ENCODE measurements at regions of chr14 and their contacts with region 1.

Region 1: DNA sequence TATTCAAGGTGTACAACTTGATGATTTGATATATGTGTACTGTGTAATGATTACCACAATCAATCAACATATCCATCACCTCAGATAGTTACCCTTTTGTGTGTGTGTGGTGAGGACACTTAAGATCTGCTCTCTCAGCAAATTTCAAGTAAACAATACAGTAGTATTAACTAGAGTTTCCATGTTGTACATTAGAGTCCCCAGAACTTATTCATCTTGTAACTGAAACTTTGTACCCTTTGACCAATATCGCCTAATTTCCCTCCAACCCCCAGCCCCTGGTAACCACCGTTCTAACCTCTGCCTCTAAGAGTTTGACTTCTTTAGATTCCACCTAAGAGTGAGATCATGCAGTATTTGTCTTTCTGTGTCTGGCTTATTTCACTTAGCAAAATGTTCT is 12.1 kb downstream of the ADCK1 start:
- DNase-seq: no peak
- ATAC-seq: no peak
- H3K4me3 ChIP-seq: no peak overlapping the region
- H3K27ac ChIP-seq: no peak overlapping the region
- H3K4me1 ChIP-seq: peaks cover 3% of the 10 kb centered on the region; the same call in 1 of the 2 replicates
- H3K27me3 ChIP-seq: no peaks in the 10 kb centered on the region
- CTCF ChIP-seq: no peak
- EP300 ChIP-seq: no peak
- POLR2A ChIP-seq: no peak
- RAD21 ChIP-seq: no peak

Region 2: GRCh38 chr14:77654001-77654441 is 158.0 kb before region 1 on chr14:
- CTCF ChIA-PET with region 1: interaction called, 22 read pairs
- POLR2A ChIA-PET with region 1: no interaction called
- in situ Hi-C with region 1: loop called (anchors 5 kb)
- intact Hi-C with region 1: loop called (anchors 1 kb)
- DNase-seq: no peak
- ATAC-seq: peak; percentile 73
- H3K4me3 ChIP-seq: peak overlapping the region; percentile 19 to 65 (median 48)
- H3K27ac ChIP-seq: no peak overlapping the region
- H3K4me1 ChIP-seq: peaks cover 37% of the 10 kb centered on the region
- H3K27me3 ChIP-seq: no peaks in the 10 kb centered on the region; a peak in 1 of 5 replicates
- CTCF ChIP-seq: no peak
- EP300 ChIP-seq: no peak
- POLR2A ChIP-seq: no peak
- RAD21 ChIP-seq: no peak

Region 3: DNA sequence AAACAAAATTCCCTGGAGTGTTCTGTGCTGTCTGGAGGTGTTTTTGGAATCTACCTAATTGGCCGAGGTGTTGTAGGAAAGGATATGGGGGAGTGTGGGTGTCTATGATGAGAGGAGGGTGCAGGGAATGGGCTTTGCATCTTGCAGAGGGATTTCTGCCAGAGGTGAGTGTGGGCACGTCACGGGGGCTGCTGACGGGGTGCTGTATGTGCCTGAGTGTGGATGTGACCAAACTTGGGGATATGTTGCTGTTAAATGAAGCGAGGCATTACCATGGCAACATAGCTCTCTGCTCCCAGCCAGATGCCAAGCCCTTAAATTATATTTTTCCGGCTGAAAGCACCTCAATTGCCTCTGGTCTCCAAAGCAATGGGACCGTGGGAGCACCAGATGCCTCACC is 151.3 kb before region 1 on chr14:
- CTCF ChIA-PET with region 1: interaction called, 22 read pairs
- POLR2A ChIA-PET with region 1: no interaction called
- in situ Hi-C with region 1: loop called (anchors 5 kb)
- intact Hi-C with region 1: loop called (anchors 1 kb)
- DNase-seq: no peak
- ATAC-seq: no peak
- H3K4me3 ChIP-seq: no peak overlapping the region
- H3K27ac ChIP-seq: no peak overlapping the region
- H3K4me1 ChIP-seq: 0 out of 2 replicates have a peak, but pooled peaks cover 11% of the 10 kb centered on the region
- H3K27me3 ChIP-seq: no peaks in the 10 kb centered on the region; a peak in 1 of 5 replicates
- CTCF ChIP-seq: no peak
- EP300 ChIP-seq: no peak
- POLR2A ChIP-seq: no peak
- RAD21 ChIP-seq: no peak

Region 4: DNA sequence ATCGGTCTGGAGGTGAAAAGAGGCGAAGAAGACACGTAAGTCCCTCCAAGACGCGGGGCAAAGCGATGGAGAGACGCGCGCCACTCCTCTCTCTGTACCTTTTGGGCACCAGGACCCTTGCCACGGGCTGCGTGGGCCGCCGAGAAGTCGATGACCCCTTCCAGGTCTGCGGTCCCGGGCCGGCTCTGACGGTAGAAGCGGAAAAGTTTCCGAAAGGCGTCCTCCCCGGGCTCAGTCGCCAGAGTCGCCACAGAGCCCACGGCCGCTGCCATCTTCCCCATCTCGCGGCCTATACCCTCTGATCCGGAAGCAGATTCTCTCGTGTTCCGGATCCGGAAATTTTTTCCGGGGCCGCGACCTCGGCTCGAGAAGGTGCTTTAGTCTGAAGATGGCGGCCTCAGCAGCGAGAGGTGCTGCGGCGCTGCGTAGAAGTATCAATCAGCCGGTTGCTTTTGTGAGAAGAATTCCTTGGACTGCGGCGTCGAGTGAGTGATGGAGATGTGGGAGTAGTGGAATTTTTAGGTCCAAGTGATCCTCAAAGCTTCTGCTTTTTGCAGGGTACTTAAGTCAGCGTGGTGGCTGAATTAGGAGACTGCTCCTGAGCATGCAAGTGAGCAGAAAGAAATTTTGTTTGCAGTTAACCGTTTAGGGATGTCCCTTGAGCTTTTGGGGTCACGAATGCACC is 104.2 kb before region 1 on chr14 and contains the starts of genes ALKBH1 and SLIRP:
- CTCF ChIA-PET with region 1: no interaction called
- POLR2A ChIA-PET with region 1: no interaction called
- in situ Hi-C with region 1: no loop called
- intact Hi-C with region 1: loop called (anchors 2 kb)
- DNase-seq: peak; percentile 81
- ATAC-seq: peak; percentile 97
- H3K4me3 ChIP-seq: peak within 1 kb of the TSS; percentile 92 to 97 (median 92)
- H3K27ac ChIP-seq: peak within 1 kb of the TSS; percentile 69
- H3K4me1 ChIP-seq: peaks cover 28% of the 10 kb centered on the region
- H3K27me3 ChIP-seq: no peaks in the 10 kb centered on the region; a peak in 1 of 5 replicates
- CTCF ChIP-seq: peak; percentile 14; the same call in 1 of the 2 replicates
- EP300 ChIP-seq: no peak
- POLR2A ChIP-seq: peak; percentile 91 to 93
- RAD21 ChIP-seq: no peak
- total RNA-seq, gene ALKBH1: 14.3 and 14.5 TPM in 2 replicates
- total RNA-seq, gene SLIRP: 548 and 656 TPM in 2 replicates

Region 5: GRCh38 chr14:77760381-77761246 is 51.4 kb before region 1 on chr14 and contains the start of gene SNW1:
- CTCF ChIA-PET with region 1: interaction called, 17 read pairs
- POLR2A ChIA-PET with region 1: no interaction called
- in situ Hi-C with region 1: loop called (anchors 5 kb)
- intact Hi-C with region 1: loop called (anchors 1 kb)
- DNase-seq: peak; percentile 91
- ATAC-seq: peak; percentile 95
- H3K4me3 ChIP-seq: peak within 1 kb of the TSS; percentile 82 to 98 (median 92)
- H3K27ac ChIP-seq: peak within 1 kb of the TSS; percentile 80
- H3K4me1 ChIP-seq: peaks cover 29% of the 10 kb centered on the region
- H3K27me3 ChIP-seq: no peaks in the 10 kb centered on the region; a peak in 1 of 5 replicates
- CTCF ChIP-seq: no peak
- EP300 ChIP-seq: no peak
- POLR2A ChIP-seq: peak; percentile 81 to 84
- RAD21 ChIP-seq: no peak
- total RNA-seq, gene SNW1: 65.8 and 103 TPM in 2 replicates

Region 6: DNA sequence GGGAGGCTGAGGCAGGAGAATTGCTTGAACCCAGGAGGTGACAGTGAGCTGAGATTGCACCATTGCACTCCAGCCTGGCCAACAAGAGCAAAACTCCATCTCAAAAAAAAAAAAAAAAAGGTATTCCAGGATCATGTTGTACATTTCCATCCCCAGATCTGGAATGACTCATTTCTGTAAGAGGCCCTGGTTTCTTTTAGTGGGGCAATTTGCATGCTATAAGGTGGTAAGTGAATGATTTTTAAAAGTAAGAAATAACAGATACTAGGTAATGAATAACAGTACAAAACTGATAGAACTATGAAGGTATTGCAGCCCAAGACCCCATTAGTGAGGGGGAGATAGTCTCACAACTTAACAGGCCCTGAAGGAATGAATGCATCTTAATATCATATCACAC is 29.8 kb before region 1 on chr14:
- CTCF ChIA-PET with region 1: no interaction called
- POLR2A ChIA-PET with region 1: no interaction called
- in situ Hi-C with region 1: no loop called
- intact Hi-C with region 1: no loop called
- DNase-seq: no peak
- ATAC-seq: no peak
- H3K4me3 ChIP-seq: no peak overlapping the region
- H3K27ac ChIP-seq: no peak overlapping the region
- H3K4me1 ChIP-seq: peaks cover 4% of the 10 kb centered on the region; the same call in 1 of the 2 replicates
- H3K27me3 ChIP-seq: no peaks in the 10 kb centered on the region
- CTCF ChIP-seq: no peak
- EP300 ChIP-seq: no peak
- POLR2A ChIP-seq: no peak
- RAD21 ChIP-seq: no peak